ENCODE measurements at regions of chr3 and their contacts with region 1.

Region 1: GRCh38 chr3:71825551-71826283 is 40.8 kb upstream of the PROK2 start:
- DNase-seq: no peak
- H3K4me3 ChIP-seq: no peak overlapping the region
- CTCF ChIP-seq: no peak

Region 2: DNA sequence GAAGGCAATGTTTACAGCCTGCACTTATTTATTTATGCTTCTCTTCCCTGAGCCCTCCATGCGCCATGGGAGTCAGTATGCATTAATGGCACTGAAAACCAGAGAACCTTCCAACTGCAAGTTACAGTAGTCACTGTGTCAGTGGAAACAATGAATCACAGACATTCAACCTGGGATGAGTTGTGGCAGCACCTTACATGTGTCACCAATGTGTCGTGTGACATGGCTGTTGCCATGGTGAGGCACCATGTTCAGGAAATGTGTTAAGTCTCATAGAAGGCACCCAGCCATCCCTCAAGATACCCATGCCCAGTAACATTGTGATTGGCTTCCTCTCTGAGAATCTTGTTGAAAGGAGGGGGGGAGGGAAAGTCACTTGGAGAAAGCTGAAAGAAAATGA is 347.1 kb before region 1 on chr3:
- in situ Hi-C with region 1: no loop called
- DNase-seq: no peak
- H3K4me3 ChIP-seq: no peak overlapping the region
- CTCF ChIP-seq: no peak

Region 3: GRCh38 chr3:71725279-71725991 is 100.3 kb before region 1 on chr3 and contains the start of gene EIF4E3:
- in situ Hi-C with region 1: no loop called
- DNase-seq: no peak
- H3K4me3 ChIP-seq: peak within 1 kb of the TSS; percentile 62
- CTCF ChIP-seq: no peak

Region 4: GRCh38 chr3:71763426-71763825 is 62.3 kb before region 1 on chr3:
- in situ Hi-C with region 1: loop called (anchors 5 kb)
- DNase-seq: no peak
- H3K4me3 ChIP-seq: no peak overlapping the region
- CTCF ChIP-seq: no peak

Measured in astrocyte of the cerebellum (primary cell).